ENCODE measurements at regions of chr20 and their contacts with region 1.

Region 1: DNA sequence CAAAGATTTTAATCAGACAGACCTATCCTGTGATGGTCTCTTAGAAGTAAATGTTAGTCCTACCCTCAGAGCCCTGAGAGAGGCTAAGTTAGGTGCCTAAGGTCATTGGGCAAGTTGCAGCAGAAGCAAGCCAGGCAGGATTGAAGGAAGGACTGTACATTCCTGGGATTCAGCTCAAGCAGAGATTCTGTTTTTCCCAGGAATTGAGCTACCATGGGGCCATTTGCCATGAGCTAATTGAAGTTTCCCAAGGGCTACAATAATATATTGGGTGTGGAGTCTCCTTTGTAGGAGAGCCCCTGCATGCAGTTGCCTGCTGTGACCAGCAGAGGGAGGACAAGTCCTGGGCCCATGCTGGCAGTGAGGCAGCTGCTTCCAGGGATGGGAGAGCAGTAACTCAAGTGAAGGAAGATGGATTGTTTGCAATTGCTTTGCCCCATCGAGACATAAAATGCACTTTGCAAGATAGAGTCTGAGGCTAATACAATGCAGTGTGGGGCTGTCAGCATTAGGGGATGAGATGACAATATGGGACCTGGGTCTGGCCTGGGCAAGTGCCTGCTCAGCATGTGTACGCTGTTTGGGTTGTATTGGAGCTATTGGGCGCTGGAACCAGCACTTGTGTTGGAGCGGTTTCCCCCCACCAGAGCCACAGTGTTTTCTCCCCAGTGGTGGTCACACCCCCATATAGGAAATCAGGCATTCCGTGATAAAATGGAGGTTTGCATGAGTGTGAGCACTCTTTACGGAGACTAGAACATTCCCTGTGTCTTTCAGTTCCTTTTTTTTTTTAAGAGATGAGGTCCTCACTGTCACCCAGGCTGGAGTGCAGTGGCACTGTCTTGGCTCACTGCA is 27.9 kb downstream of the DNMT3B start:
- DNase-seq: peak; percentile 88
- CTCF ChIP-seq: peak; percentile 97

Region 2: DNA sequence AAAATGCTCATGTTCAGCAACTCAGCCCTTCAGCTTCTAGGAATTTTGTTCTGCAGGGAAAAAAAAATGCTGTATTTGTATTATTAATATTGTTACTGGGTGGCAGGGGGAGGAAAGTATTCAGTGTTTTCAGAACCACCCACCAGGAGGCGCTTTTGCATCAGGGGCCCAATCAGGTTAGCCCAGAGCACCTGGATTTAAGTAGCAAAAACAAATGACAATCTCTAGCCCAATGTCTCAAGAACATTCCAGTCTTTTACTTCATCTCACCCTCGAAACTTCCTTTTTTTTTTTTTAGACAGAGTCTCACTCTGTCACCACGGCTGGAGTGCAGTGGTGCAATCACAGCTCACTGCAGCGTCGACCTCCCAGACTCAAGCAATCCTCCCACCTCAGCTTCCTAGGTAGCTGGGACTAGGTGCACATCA is 115.7 kb before region 1 on chr20:
- in situ Hi-C with region 1: loop called (anchors 10 kb)
- DNase-seq: peak; percentile 84
- CTCF ChIP-seq: peak; percentile 66

Region 3: DNA sequence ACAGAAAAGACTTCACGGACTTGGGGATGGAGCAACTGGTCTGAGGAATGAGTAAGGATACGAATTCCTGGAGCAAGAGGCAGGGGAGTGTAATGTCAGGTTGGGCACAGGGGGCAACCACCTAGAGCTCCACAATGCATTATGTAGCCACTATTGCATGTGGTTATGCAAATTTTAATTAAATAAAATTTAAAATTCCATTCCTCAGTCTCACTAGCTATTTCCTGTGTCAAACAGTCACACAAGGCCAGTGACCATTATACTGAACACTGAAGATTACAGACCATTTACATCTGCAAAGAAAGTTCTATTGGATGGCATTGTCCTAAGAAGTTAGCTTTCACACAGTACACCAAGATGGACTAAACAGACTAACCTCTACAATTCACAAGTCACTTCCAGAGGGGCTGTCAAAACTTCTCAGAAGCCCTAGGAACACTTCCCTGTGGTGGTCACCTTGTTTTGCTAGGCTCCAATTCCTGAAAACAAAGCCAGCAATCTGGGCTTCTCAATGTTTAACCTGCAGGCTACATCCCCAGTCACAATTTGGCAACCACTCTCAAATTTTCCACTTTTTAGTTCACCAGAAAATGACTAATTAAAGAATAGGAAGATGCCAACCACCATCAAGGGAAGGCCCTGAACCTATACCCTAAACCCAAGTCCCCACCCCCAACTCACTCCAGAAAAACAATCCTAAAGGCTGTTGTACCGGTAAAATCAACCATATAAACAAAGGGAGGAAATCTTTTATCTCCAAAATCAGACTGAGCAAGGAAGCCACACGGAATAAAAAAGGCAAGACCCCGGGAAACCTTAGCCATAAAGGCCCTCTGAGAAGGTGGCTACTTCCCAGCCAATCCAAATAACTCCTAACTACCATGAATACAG is 82.2 kb before region 1 on chr20:
- in situ Hi-C with region 1: no loop called
- DNase-seq: no peak
- CTCF ChIP-seq: no peak

Region 4: DNA sequence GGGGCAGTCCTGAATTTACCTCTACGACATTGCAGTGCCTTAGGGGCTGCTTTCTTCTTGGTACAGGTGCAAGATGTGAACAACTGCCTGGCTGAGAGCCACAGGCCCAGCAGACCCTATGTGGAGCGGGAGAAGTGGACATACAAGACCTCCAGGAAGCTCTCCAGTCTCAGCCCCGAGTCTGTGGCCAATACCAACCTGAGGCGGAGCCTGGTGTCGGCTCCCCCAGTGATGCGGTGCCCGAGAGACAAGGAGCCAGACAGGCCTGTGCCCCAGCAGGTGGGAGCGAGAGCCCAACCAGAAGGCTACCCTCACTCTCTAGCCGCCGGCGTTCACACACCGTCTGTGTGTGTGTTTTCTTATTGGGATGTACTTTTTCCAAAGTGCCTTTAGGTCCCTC is 128.2 kb after region 1 on chr20:
- in situ Hi-C with region 1: no loop called
- DNase-seq: no peak
- CTCF ChIP-seq: no peak

Measured in GM13976 (cell line).